ENCODE measurements at regions of chr6 and their contacts with region 1.

Region 1: GRCh38 chr6:17714879-17715851 is 8.4 kb upstream of the NUP153 start:
- DNase-seq: no peak
- ATAC-seq: peak in 1 of 4 donors; percentile 39
- H3K4me3 ChIP-seq: no peak overlapping the region
- H3K27ac ChIP-seq: peak overlapping the region in 1 of 12 donors; percentile 69
- H3K4me1 ChIP-seq: peaks cover 0 to 21% (median 0%) of the 10 kb centered on the region in 12 donors
- H3K27me3 ChIP-seq: no peaks in the 10 kb centered on the region
- CTCF ChIP-seq: no peak
- POLR2A ChIP-seq: no peak

Region 2: GRCh38 chr6:17700421-17701416 is 14.4 kb before region 1 on chr6:
- intact Hi-C with region 1: no loop called
- DNase-seq: no peak
- ATAC-seq: no peak
- H3K4me3 ChIP-seq: no peak overlapping the region
- H3K27ac ChIP-seq: peak overlapping the region in 7 of 12 donors; percentile 6 to 52 (median 29)
- H3K4me1 ChIP-seq: peaks cover 7 to 68% (median 48%) of the 10 kb centered on the region in 12 donors
- H3K27me3 ChIP-seq: no peaks in the 10 kb centered on the region
- CTCF ChIP-seq: no peak
- POLR2A ChIP-seq: no peak

Region 3: GRCh38 chr6:17762651-17763050 is 47.5 kb after region 1 on chr6:
- intact Hi-C with region 1: loop called in 1 of 10 experiments (anchors 5 kb)
- DNase-seq: no peak
- ATAC-seq: no peak
- H3K4me3 ChIP-seq: no peak overlapping the region
- H3K27ac ChIP-seq: no peak overlapping the region
- H3K4me1 ChIP-seq: no peaks in the 10 kb centered on the region
- H3K27me3 ChIP-seq: no peaks in the 10 kb centered on the region
- CTCF ChIP-seq: no peak
- POLR2A ChIP-seq: no peak

Region 4: GRCh38 chr6:17780061-17780460 is 64.9 kb after region 1 on chr6:
- intact Hi-C with region 1: no loop called
- DNase-seq: no peak
- ATAC-seq: peak in 1 of 4 donors; percentile 37
- H3K4me3 ChIP-seq: no peak overlapping the region
- H3K27ac ChIP-seq: no peak overlapping the region
- H3K4me1 ChIP-seq: peaks cover 0 to 3% (median 0%) of the 10 kb centered on the region in 12 donors
- H3K27me3 ChIP-seq: no peaks in the 10 kb centered on the region
- CTCF ChIP-seq: no peak
- POLR2A ChIP-seq: no peak